Breast epithelium (tissue), 4 donors: ENCODE measurements at regions of chr9 and their contacts with region 1.

Region 1: GRCh38 chr9:96186591-96187011 is 115.4 kb downstream of the HSD17B3 start:
- DNase-seq: no peak
- H3K4me3 ChIP-seq: no peak overlapping the region
- H3K27ac ChIP-seq: no peak overlapping the region
- H3K4me1 ChIP-seq: no peaks in the 10 kb centered on the region
- H3K27me3 ChIP-seq: peaks cover 0 to 11% of the 10 kb centered on the region in 2 donors
- CTCF ChIP-seq: no peak
- POLR2A ChIP-seq: no peak

Region 2: GRCh38 chr9:94507531-94508258 is 1678.9 kb before region 1 on chr9:
- intact Hi-C with region 1: loop called (anchors 5 kb)
- DNase-seq: no peak
- H3K4me3 ChIP-seq: no peak overlapping the region
- H3K27ac ChIP-seq: no peak overlapping the region
- H3K4me1 ChIP-seq: no peaks in the 10 kb centered on the region
- H3K27me3 ChIP-seq: no peaks in the 10 kb centered on the region
- CTCF ChIP-seq: no peak
- POLR2A ChIP-seq: no peak